Gastrocnemius medialis (tissue), 4 donors: ENCODE measurements at regions of chr12 and their contacts with region 1.

Region 1: DNA sequence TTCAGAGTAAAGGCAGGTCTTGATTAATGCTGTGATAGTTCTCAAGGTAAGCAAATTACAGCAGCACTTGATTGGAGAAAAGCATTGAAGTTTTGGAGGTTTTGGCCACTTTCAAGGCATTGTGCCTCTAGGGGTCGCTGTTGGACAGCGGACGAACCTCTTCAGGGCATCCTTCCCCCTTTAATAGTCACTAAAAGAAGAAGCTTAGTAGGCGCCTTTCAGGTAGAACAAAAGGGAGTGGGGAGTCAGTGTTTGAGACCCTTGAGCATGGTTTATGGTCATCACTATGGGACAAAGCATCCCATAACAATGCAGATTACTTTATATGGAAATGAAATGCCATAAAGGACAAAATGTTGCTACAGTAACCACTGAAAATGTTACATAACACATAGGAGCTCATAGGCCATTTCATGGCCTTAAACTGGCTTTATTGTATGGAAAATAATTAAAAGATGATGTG is 199.5 kb upstream of the DCN start:
- DNase-seq: peak; percentile 43 to 51
- ATAC-seq: peak; percentile 78 to 83
- H3K4me3 ChIP-seq: peak overlapping the region; percentile 43 to 55 (median 52)
- H3K27ac ChIP-seq: peak overlapping the region; percentile 25 to 62 (median 46)
- H3K4me1 ChIP-seq: peaks cover 4 to 6% of the 10 kb centered on the region in 2 donors
- H3K27me3 ChIP-seq: no peaks in the 10 kb centered on the region
- CTCF ChIP-seq: peak; percentile 72 to 91 (median 80)
- POLR2A ChIP-seq: no peak

Region 2: GRCh38 chr12:91811481-91812287 is 429.6 kb after region 1 on chr12:
- in situ Hi-C with region 1: no loop called
- intact Hi-C with region 1: loop called (anchors 5 kb)
- DNase-seq: peak; percentile 19 to 27
- ATAC-seq: peak; percentile 50 to 60
- H3K4me3 ChIP-seq: no peak overlapping the region
- H3K27ac ChIP-seq: no peak overlapping the region
- H3K4me1 ChIP-seq: no peaks in the 10 kb centered on the region
- H3K27me3 ChIP-seq: no peaks in the 10 kb centered on the region
- CTCF ChIP-seq: peak; percentile 61 to 75 (median 68)
- POLR2A ChIP-seq: no peak

Region 3: GRCh38 chr12:92561543-92561899 is 1179.4 kb after region 1 on chr12:
- in situ Hi-C with region 1: loop called in 1 of 4 experiments (anchors 10 kb)
- intact Hi-C with region 1: no loop called
- DNase-seq: peak; percentile 41 to 50
- ATAC-seq: peak; percentile 92 to 94
- H3K4me3 ChIP-seq: no peak overlapping the region
- H3K27ac ChIP-seq: peak overlapping the region; percentile 33 to 66 (median 57)
- H3K4me1 ChIP-seq: peaks cover 8 to 14% of the 10 kb centered on the region in 2 donors
- H3K27me3 ChIP-seq: no peaks in the 10 kb centered on the region
- CTCF ChIP-seq: no peak
- POLR2A ChIP-seq: no peak

Region 4: DNA sequence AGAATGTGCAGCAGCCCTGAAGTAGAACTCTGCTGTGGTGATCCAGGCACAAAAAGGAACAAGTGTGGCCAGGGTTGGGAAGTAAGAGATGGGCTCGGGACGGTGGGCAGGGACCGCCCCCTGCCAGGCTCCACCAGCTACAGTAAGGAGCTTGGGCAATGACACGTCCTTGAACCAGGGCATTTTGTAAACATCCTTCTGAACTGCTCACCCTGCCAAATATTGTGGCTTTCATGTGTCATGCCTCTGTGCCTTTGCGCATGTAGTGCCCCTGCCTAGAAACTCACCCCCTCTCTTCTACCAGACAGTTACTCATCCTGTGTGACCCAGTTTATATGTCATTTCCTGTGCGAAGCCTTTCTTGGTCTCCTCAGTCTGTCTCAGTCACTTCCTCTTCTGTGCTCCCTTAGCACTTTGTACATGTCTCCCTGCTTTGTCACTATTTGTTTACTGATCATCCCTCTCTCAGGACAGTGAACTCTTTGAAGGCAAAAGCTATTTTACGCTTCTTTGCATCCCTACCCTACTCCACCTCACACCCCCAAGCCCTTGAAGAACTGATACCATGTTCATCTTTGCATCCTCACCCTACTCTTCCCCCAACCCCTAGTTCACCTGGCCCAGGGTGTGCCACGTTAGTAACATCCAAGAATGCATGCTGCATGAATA is 1211.8 kb after region 1 on chr12:
- in situ Hi-C with region 1: loop called in 1 of 4 experiments (anchors 25 kb)
- intact Hi-C with region 1: no loop called
- DNase-seq: peak in 1 of 2 donors; percentile 28
- ATAC-seq: peak; percentile 52 to 56
- H3K4me3 ChIP-seq: no peak overlapping the region
- H3K27ac ChIP-seq: no peak overlapping the region
- H3K4me1 ChIP-seq: no peaks in the 10 kb centered on the region
- H3K27me3 ChIP-seq: no peaks in the 10 kb centered on the region
- CTCF ChIP-seq: no peak
- POLR2A ChIP-seq: no peak

Region 5: GRCh38 chr12:92649511-92650227 is 1267.6 kb after region 1 on chr12:
- in situ Hi-C with region 1: loop called in 2 of 4 experiments (anchors 25 kb)
- intact Hi-C with region 1: loop called (anchors 1 kb)
- DNase-seq: peak; percentile 16 to 26
- ATAC-seq: peak; percentile 83 to 89
- H3K4me3 ChIP-seq: no peak overlapping the region
- H3K27ac ChIP-seq: no peak overlapping the region
- H3K4me1 ChIP-seq: no peaks in the 10 kb centered on the region
- H3K27me3 ChIP-seq: no peaks in the 10 kb centered on the region
- CTCF ChIP-seq: peak; percentile 44 to 69 (median 50)
- POLR2A ChIP-seq: no peak